Activated CD8-positive, alpha-beta T cell treated with anti-CD3 and anti-CD28 coated beads for 36 hours (primary cell): ENCODE measurements at regions of chr1 and their contacts with region 1.

Region 1: DNA sequence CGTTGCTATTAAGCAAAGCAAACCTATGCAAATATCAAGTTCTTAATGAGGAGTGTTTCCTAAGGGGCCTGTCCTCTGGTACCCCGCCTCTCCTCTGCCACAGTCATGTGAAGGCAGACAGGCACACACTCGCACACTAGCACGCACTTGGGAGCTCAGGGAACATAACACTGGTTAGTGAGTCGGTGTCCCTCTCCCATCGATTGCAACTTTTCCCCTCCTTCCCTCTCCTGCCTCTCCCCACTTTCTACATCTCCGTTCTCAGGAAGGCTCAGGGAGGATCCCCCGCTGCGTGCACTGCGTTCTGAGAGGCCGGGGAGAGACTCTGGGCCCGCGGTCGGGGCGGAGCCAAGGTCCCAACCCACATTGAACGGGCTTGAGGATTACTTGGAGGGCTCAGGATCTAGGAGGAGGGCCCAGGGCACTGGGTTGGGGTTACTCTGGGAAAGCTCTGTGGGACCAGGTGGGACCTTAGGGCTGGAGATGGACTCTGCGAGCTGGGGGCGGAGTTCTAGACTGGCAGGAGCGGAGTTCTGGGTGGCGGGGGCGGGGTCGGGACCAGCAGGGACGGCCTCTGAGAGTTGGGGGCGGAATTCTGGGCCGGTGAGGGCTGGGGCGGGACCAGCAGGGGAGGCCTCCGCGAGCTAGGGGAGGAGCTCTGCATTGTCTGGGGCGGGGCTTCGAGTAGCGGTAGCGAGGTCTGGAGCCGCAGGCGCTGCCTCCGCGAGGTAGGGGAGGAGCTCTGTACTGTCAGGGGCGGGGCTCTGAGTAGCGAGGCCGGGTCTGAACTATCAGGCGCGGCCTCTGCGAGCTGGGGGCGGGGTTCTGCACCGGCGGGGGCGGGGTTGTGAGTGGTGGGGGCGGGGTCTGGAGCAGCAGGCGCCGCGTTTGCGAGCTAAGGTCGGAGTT is 533 bp upstream of the LEPR start:
- DNase-seq: peak; percentile 99
- ATAC-seq: peak; percentile 96
- H3K4me3 Mint-ChIP-seq: no peak overlapping the region
- H3K27ac Mint-ChIP-seq: peak overlapping the region; percentile 93
- H3K4me1 Mint-ChIP-seq: peaks cover 6% of the 10 kb centered on the region
- H3K27me3 Mint-ChIP-seq: no peaks in the 10 kb centered on the region
- CTCF ChIP-seq: no peak

Region 2: GRCh38 chr1:65254319-65255034 is 165.5 kb before region 1 on chr1:
- CTCF ChIA-PET with region 1: interaction called, 4 read pairs
- POLR2A ChIA-PET with region 1: no interaction called
- intact Hi-C with region 1: loop called (anchors 5 kb)
- DNase-seq: peak; percentile 89
- ATAC-seq: peak; percentile 98
- H3K4me3 Mint-ChIP-seq: peak overlapping the region; percentile 85
- H3K27ac Mint-ChIP-seq: no peak overlapping the region
- H3K4me1 Mint-ChIP-seq: peaks cover 18% of the 10 kb centered on the region
- H3K27me3 Mint-ChIP-seq: peaks cover 13% of the 10 kb centered on the region
- CTCF ChIP-seq: no peak

Region 3: GRCh38 chr1:65393347-65393746 is 26.6 kb before region 1 on chr1:
- CTCF ChIA-PET with region 1: interaction called, 17 read pairs
- POLR2A ChIA-PET with region 1: interaction called, 9 read pairs
- intact Hi-C with region 1: no loop called
- DNase-seq: peak; percentile 58
- ATAC-seq: peak; percentile 94
- H3K4me3 Mint-ChIP-seq: no peak overlapping the region
- H3K27ac Mint-ChIP-seq: peak overlapping the region; percentile 55
- H3K4me1 Mint-ChIP-seq: peaks cover 55% of the 10 kb centered on the region
- H3K27me3 Mint-ChIP-seq: no peaks in the 10 kb centered on the region
- CTCF ChIP-seq: no peak

Region 4: DNA sequence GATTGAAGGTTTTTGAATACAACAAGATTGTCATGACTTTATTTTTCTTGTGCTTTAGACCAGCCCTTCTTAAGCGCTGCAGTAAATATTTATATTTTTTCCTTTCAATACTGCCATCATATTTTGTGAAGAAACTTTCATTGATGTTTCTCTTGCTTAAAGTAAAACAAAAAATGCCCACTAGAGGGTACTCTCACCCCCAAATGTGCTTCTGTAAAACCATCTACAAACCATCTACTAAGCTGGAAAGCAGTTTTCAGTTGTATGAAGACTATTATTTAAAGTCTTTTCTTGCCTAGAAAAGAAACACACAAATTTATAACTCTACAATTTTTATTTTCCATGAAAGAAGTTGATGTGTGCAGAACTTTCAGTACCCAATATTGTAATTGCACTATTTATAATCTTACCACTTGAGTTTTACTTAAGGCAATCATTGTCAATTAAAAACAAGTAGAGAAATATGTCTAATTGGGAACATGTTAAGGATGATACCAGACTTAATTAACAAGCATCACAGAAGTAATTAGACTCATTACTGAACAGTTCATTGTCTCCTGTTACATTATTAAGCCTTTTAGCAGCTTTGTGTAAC is 11.3 kb after region 1 on chr1:
- CTCF ChIA-PET with region 1: interaction called, 15 read pairs
- POLR2A ChIA-PET with region 1: interaction called, 3 read pairs
- intact Hi-C with region 1: no loop called
- DNase-seq: no peak
- ATAC-seq: peak; percentile 34
- H3K4me3 Mint-ChIP-seq: no peak overlapping the region
- H3K27ac Mint-ChIP-seq: no peak overlapping the region
- H3K4me1 Mint-ChIP-seq: peaks cover 4% of the 10 kb centered on the region
- H3K27me3 Mint-ChIP-seq: no peaks in the 10 kb centered on the region
- CTCF ChIP-seq: peak; percentile 63